HEK293 (cell line): ENCODE measurements at regions of chr19 and their contacts with region 1.

Region 1: GRCh38 chr19:10388957-10389356 is 8.6 kb upstream of the TYK2 start:
- H3K4me3 ChIP-seq: no peak overlapping the region
- H3K27ac ChIP-seq: no peak overlapping the region
- H3K4me1 ChIP-seq: no peaks in the 10 kb centered on the region
- CTCF ChIP-seq: peak; percentile 61; the same call in 1 of the 2 replicates

Region 2: GRCh38 chr19:10019246-10019645 is 369.7 kb before region 1 on chr19:
- CTCF ChIA-PET with region 1: no interaction called
- POLR2A ChIA-PET with region 1: no interaction called
- H3K4me3 ChIP-seq: no peak overlapping the region
- H3K27ac ChIP-seq: no peak overlapping the region
- H3K4me1 ChIP-seq: no peaks in the 10 kb centered on the region
- CTCF ChIP-seq: no peak

Region 3: GRCh38 chr19:10259162-10259905 is 129.6 kb before region 1 on chr19:
- CTCF ChIA-PET with region 1: interaction called, 170 read pairs
- POLR2A ChIA-PET with region 1: interaction called, 24 read pairs
- H3K4me3 ChIP-seq: no peak overlapping the region
- H3K27ac ChIP-seq: no peak overlapping the region
- H3K4me1 ChIP-seq: no peaks in the 10 kb centered on the region
- CTCF ChIP-seq: peak; percentile 85

Region 4: DNA sequence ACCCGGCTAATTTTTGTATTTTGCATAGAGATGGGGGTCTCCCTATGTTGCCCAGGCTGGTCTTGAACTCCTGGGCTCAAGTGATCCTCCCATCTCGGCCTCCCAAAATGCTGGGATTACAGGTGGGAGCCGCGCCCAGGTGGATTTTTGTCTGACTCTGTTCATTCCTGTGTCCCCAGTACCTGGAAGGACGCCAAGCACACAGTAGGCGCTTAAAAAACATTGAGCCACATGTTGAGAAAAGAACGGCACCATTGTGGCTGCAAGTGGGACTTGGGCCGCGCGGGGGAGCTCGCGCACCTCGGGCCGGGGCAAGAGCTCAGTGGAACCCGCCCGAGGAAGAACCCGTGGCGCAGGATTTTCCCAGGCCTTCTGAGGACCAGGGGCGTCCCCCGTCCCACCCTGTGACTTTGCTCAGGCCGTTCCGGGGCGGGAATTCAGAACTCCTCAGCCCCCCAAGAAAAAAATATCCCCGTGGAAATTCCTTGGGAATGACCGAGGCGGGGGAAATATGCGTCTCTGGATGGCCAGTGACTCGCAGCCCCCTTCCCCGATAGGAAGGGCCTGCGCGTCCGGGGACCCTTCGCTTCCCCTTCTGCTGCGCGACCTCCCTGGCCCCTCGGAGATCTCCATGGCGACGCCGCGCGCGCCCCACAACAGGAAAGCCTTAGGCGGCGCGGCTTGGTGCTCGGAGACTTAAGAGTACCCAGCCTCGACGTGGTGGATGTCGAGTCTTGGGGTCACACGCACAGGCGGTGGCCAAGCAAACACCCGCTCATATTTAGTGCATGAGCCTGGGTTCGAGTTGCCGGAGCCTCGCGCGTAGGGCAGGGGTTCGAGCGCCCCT is 119.4 kb before region 1 on chr19:
- CTCF ChIA-PET with region 1: interaction called, 170 read pairs
- POLR2A ChIA-PET with region 1: interaction called, 13 read pairs
- H3K4me3 ChIP-seq: no peak overlapping the region; the same call in none of the 2 replicates
- H3K27ac ChIP-seq: no peak overlapping the region
- H3K4me1 ChIP-seq: no peaks in the 10 kb centered on the region
- CTCF ChIP-seq: peak; percentile 93

Region 5: GRCh38 chr19:10279737-10280442 is 109.1 kb before region 1 on chr19:
- CTCF ChIA-PET with region 1: interaction called, 14 read pairs
- POLR2A ChIA-PET with region 1: no interaction called
- H3K4me3 ChIP-seq: no peak overlapping the region
- H3K27ac ChIP-seq: no peak overlapping the region
- H3K4me1 ChIP-seq: no peaks in the 10 kb centered on the region
- CTCF ChIP-seq: no peak

Region 6: GRCh38 chr19:10292206-10292788 is 96.7 kb before region 1 on chr19:
- CTCF ChIA-PET with region 1: interaction called, 5 read pairs
- POLR2A ChIA-PET with region 1: interaction called, 13 read pairs
- H3K4me3 ChIP-seq: peak overlapping the region; percentile 43
- H3K27ac ChIP-seq: peak overlapping the region; percentile 6; the same call in 1 of the 2 replicates
- H3K4me1 ChIP-seq: peaks cover 4% of the 10 kb centered on the region; the same call in 1 of the 2 replicates
- CTCF ChIP-seq: no peak

Region 7: GRCh38 chr19:10332955-10333757 is 55.8 kb before region 1 on chr19 and contains the start of gene RAVER1:
- CTCF ChIA-PET with region 1: interaction called, 12 read pairs
- POLR2A ChIA-PET with region 1: interaction called, 6 read pairs
- H3K4me3 ChIP-seq: peak within 1 kb of the TSS; percentile 92
- H3K27ac ChIP-seq: peak within 1 kb of the TSS; percentile 78
- H3K4me1 ChIP-seq: no peaks in the 10 kb centered on the region
- CTCF ChIP-seq: peak; percentile 92

Region 8: DNA sequence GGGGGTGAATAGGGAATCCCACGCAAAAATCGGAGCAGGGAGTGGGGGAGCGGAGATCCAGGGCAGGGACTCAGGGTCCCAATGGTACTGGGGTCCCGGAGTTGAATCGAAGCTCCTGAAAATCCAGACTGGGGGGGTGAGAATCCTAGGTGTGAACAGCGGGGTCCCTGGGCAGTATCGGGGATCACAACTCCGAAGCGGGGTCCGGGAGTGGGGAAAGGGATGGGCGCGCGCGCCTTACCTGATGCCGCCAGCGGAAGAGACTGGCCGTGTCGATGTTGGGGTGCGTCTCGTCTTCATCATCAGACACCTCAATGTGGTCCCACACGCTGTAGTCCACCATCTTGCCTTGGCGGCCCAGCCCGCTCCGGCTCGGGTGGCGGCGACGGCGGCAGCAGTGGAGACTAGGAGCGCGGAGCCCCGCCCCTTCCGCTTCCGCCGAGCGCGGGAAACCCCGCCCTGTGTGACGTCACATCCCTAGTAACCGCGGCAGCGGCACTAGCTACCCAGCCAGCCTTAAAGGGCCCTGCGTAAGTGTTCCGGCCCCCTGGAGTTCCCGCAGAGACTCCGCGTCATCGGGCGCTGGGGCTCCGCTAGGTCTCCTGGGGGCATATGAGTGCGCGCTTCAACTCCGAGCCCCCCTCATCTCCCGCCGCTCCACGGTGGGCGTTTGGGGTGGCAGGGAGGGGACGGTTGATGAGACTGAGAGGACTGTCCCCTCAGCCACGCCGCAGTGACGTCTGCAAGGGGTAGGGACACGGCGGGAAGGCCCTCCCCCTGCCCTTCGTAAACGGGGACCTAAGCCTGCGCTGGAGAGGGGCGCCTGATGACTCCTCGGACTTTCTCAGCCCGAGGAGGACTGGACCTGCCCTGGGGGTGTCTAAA is 14.4 kb after region 1 on chr19 and contains the start of gene CDC37:
- CTCF ChIA-PET with region 1: interaction called, 15 read pairs
- POLR2A ChIA-PET with region 1: interaction called, 3 read pairs
- H3K4me3 ChIP-seq: peak within 1 kb of the TSS; percentile 99
- H3K27ac ChIP-seq: peak within 1 kb of the TSS; percentile 73
- H3K4me1 ChIP-seq: peaks cover 8% of the 10 kb centered on the region
- CTCF ChIP-seq: no peak